CD4-positive, alpha-beta memory T cell (primary cell): ENCODE measurements at regions of chr9 and their contacts with region 1.

Region 1: DNA sequence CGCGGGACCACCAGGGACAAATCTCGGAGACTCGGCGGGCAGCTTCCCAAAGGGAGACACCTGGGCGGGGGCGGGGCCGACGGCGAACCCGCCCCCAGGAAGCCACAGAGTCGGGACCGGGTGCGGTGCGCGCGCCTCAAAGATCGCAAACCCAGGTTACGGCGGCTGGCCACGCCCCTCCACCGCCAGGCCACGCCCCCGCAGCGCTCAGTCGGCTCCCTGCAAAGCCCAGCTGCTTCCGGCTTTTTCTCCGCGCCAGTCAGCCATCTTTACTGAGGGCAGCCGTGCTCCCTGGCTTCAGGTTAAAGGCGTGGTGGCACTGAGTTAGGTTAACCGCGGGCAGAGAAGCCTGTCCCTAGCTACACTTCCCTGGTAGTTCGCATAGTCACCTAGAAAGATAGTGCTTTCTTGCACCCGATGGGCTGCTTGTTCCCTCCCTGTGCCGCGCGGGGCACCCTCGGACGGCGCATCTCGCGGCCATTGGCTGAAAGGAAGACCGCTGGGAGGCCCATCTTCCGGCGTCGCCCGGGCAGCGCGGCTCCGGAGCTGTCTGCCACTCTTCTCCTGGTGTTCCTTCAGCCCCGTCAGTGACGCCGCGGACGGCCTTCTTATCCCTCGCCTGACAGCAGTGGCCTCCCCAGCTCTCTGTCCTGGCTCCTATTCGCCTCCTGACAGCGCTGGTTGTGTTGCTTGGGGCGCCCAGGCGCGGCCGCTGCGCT is at the start of gene TBC1D2:
- DNase-seq: peak; percentile 96 to 98 (median 97)
- H3K4me3 ChIP-seq: peak within 1 kb of the TSS; percentile 90 to 91
- H3K4me3 Mint-ChIP-seq: peak within 1 kb of the TSS; percentile 93 to 99 (median 97)
- H3K27ac ChIP-seq: peak within 1 kb of the TSS; percentile 82
- H3K27ac Mint-ChIP-seq: peak within 1 kb of the TSS; percentile 87 to 97 (median 95)
- H3K4me1 ChIP-seq: peaks cover 35% of the 10 kb centered on the region
- H3K4me1 Mint-ChIP-seq: peaks cover 23 to 50% (median 40%) of the 10 kb centered on the region in 4 donors
- H3K27me3 ChIP-seq: no peaks in the 10 kb centered on the region
- H3K27me3 Mint-ChIP-seq: no peaks in the 10 kb centered on the region
- total RNA-seq, gene TBC1D2: 11.2 to 11.4 TPM

Region 2: DNA sequence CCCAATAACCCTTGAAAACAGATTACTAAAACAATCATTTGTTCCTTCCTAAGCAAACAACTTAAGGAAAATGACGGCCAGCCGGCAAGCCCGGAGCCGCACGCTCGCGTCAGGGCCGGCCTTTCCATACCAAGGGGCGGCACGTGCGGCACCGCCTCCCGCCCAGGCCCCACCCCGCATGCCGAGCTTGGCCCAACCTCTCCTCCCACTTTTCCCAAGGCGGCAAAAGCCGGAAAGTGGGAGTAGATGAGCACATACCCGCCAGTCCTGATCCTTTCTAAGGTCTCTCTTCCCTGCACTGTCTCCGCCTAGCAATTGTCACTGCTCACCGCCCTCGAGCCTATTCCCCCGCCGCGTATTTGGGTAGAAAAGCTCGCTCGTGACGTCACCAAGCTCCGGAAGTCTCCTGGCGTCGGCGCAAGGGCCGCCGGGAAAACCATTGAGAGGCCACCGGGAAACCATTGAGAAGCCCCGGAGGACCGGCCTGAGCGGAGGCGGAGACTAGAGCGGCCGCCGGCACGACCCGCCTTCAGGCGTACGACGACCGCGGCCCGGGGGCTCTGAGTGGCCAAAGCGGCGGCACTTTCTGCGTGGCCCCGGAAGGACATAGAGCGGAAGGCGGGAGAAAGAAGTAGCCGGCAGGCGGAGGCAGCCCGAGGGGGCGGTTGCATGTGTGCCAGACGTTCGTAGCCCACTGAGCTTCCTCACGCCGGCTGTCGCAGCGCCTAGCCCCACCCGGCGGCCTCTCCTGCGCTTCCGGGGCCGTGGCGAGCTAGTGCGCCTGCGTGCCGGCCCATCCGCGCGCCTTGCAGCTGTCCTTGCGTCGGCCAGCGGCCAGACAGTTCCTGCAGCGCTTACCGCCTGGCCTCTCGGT is 622.5 kb before region 1 on chr9 and contains the starts of genes NCBP1 and TSTD2:
- CTCF ChIA-PET with region 1: no interaction called
- POLR2A ChIA-PET with region 1: interaction called, 18 read pairs
- intact Hi-C with region 1: loop called (anchors 1 kb)
- DNase-seq: peak; percentile 96 to 97 (median 97)
- H3K4me3 ChIP-seq: peak within 1 kb of the TSS; percentile 80 to 87
- H3K4me3 Mint-ChIP-seq: peak within 1 kb of the TSS; percentile 96 to 100 (median 98)
- H3K27ac ChIP-seq: peak within 1 kb of the TSS; percentile 92
- H3K27ac Mint-ChIP-seq: peak within 1 kb of the TSS; percentile 96 to 100 (median 100)
- H3K4me1 ChIP-seq: peaks cover 52% of the 10 kb centered on the region
- H3K4me1 Mint-ChIP-seq: peaks cover 37 to 65% (median 51%) of the 10 kb centered on the region in 4 donors
- H3K27me3 ChIP-seq: no peaks in the 10 kb centered on the region
- H3K27me3 Mint-ChIP-seq: no peaks in the 10 kb centered on the region
- total RNA-seq, gene NCBP1: 40.7 to 50.8 TPM
- total RNA-seq, gene TSTD2: 17.8 to 18.4 TPM

Region 3: DNA sequence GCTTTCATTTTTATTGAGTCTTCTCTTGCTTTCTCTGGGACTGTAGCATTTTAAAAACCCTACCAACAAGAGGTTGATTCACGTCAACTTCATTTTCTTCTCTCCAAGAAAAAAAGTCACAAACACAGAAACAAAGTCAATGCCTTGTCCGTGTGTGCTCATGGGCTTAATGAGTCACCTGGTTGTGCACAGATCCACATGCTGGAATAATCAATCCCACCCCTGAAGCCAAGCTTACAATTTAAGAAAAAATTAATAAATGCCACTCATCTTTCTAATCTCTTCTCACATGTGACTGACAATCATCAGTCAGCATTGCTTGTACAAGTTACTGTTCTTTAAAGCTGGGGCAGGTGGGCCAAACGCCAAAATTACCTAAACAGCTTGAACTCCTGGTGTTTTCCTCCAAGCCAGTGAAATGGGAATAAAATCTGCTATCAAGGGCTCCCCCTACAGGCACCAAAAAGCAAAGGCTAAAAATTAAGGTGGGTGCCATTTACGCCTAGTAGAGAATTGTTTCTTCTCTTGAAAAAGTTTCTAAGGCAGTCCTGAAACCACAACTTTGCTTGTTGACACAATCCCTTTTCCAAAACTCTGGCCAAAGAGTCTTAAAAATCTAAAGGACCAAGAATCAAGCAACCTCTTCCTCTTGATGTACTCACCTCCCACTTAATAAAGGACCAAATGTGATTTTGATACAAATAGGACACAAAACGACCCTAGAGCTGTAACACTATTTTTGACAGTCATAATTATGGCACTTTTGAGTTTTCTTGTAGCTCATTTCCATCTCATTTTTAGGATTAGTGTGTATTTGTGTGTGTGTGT is 354.8 kb before region 1 on chr9:
- CTCF ChIA-PET with region 1: interaction called, 3 read pairs
- POLR2A ChIA-PET with region 1: interaction called, 11 read pairs
- intact Hi-C with region 1: loop called (anchors 5 kb)
- DNase-seq: peak; percentile 39 to 54 (median 43)
- H3K4me3 ChIP-seq: no peak overlapping the region
- H3K4me3 Mint-ChIP-seq: peak overlapping the region in 3 of 8 donors; percentile 20 to 59 (median 43)
- H3K27ac ChIP-seq: peak overlapping the region; percentile 21
- H3K27ac Mint-ChIP-seq: peak overlapping the region; percentile 75 to 93 (median 92)
- H3K4me1 ChIP-seq: peaks cover 59% of the 10 kb centered on the region
- H3K4me1 Mint-ChIP-seq: peaks cover 33 to 63% (median 45%) of the 10 kb centered on the region in 4 donors
- H3K27me3 ChIP-seq: no peaks in the 10 kb centered on the region
- H3K27me3 Mint-ChIP-seq: no peaks in the 10 kb centered on the region

Region 4: DNA sequence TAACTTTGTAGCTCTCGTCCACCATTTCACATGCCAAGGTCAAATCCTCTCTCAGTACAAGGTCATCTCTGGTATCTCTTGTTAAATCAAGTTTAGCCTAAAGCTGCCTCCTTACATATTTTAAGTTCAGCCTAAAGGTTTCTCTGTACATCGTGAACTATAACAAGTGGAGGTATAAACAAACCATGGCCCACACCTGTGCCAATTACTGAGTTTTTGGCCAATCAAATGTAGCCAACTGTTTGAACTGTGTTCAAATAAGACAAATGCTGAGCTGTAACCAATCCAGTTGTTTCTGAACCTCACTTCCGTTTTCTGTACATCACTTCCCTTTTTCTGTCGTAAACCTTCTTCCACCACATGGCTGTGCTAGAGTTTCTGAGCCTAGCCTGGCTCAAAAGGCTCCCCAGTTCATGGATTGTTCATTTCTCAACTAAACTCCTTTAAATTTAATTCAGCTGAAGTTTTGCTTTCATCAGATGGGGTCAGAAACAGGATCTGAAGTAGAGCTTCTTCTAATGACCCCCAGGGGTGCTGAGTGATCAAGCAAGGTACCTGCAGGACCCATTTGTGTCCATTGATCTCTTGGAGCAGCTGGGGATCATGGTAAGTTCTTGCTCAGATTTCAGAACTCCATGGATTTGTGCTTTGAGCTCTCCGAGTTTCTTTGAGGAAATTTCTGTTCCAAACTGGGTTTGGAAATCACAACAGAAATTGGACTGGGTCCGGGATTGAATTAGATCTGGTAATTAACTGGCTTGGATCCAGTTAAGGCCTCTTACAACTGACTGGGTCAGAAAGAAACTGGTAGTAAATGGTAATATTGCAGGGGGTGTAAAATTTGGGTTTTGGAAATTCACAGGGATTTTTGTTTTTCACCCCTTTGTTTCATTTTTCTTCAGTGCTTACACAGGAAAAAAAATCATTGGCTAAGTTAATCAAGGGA is 210.2 kb before region 1 on chr9:
- CTCF ChIA-PET with region 1: interaction called, 6 read pairs
- POLR2A ChIA-PET with region 1: interaction called, 19 read pairs
- intact Hi-C with region 1: no loop called
- DNase-seq: peak; percentile 60 to 80 (median 71)
- H3K4me3 ChIP-seq: peak overlapping the region; percentile 9 to 15
- H3K4me3 Mint-ChIP-seq: peak overlapping the region; percentile 65 to 88 (median 80)
- H3K27ac ChIP-seq: peak overlapping the region; percentile 9
- H3K27ac Mint-ChIP-seq: peak overlapping the region; percentile 29 to 97 (median 89)
- H3K4me1 ChIP-seq: peaks cover 22% of the 10 kb centered on the region
- H3K4me1 Mint-ChIP-seq: peaks cover 11 to 31% (median 15%) of the 10 kb centered on the region in 4 donors
- H3K27me3 ChIP-seq: no peaks in the 10 kb centered on the region
- H3K27me3 Mint-ChIP-seq: no peaks in the 10 kb centered on the region

Region 5: GRCh38 chr9:98064623-98065392 is 190.9 kb before region 1 on chr9:
- CTCF ChIA-PET with region 1: no interaction called
- POLR2A ChIA-PET with region 1: interaction called, 66 read pairs
- intact Hi-C with region 1: no loop called
- DNase-seq: no peak
- H3K4me3 ChIP-seq: no peak overlapping the region
- H3K4me3 Mint-ChIP-seq: no peak overlapping the region
- H3K27ac ChIP-seq: no peak overlapping the region
- H3K27ac Mint-ChIP-seq: peak overlapping the region in 2 of 7 donors; percentile 16 to 29
- H3K4me1 ChIP-seq: no peaks in the 10 kb centered on the region
- H3K4me1 Mint-ChIP-seq: peaks cover 8 to 15% (median 10%) of the 10 kb centered on the region in 4 donors
- H3K27me3 ChIP-seq: no peaks in the 10 kb centered on the region
- H3K27me3 Mint-ChIP-seq: no peaks in the 10 kb centered on the region

Region 6: DNA sequence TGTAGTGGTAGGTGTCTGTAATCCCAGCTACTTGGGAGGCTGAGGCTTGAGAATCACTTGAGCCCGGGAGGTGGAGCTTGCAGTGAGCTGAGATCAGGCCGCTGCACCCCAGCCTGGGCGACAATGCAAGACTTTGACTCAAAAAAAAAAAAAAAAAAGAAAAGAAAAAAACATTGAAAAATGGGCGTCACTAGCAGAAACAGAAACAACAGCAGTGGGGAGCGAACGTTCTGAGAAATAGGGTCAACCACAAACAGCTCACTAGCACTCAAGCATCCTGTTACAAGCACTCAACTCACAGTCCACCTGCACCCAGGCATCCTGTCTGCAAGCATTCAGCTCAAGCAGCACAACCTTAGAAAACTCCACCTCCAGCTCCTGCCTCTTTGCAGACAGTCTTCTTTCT is 153.9 kb before region 1 on chr9:
- CTCF ChIA-PET with region 1: interaction called, 5 read pairs
- POLR2A ChIA-PET with region 1: interaction called, 44 read pairs
- intact Hi-C with region 1: loop called (anchors 1 kb)
- DNase-seq: peak; percentile 85 to 95 (median 94)
- H3K4me3 ChIP-seq: peak overlapping the region in 1 of 2 donors; percentile 40
- H3K4me3 Mint-ChIP-seq: peak overlapping the region; percentile 67 to 85 (median 78)
- H3K27ac ChIP-seq: peak overlapping the region; percentile 64
- H3K27ac Mint-ChIP-seq: peak overlapping the region; percentile 91 to 98 (median 94)
- H3K4me1 ChIP-seq: peaks cover 99% of the 10 kb centered on the region
- H3K4me1 Mint-ChIP-seq: peaks cover 58 to 94% (median 77%) of the 10 kb centered on the region in 4 donors
- H3K27me3 ChIP-seq: no peaks in the 10 kb centered on the region
- H3K27me3 Mint-ChIP-seq: no peaks in the 10 kb centered on the region

Region 7: GRCh38 chr9:98118640-98119601 is 136.8 kb before region 1 on chr9 and contains the start of gene TRIM14:
- CTCF ChIA-PET with region 1: interaction called, 21 read pairs
- POLR2A ChIA-PET with region 1: interaction called, 112 read pairs
- intact Hi-C with region 1: loop called (anchors 2 kb)
- DNase-seq: peak; percentile 35 to 71 (median 45)
- H3K4me3 ChIP-seq: peak within 1 kb of the TSS; percentile 70 to 87
- H3K4me3 Mint-ChIP-seq: peak within 1 kb of the TSS; percentile 87 to 96 (median 92)
- H3K27ac ChIP-seq: peak within 1 kb of the TSS; percentile 92
- H3K27ac Mint-ChIP-seq: peak within 1 kb of the TSS; percentile 89 to 99 (median 95)
- H3K4me1 ChIP-seq: peaks cover 70% of the 10 kb centered on the region
- H3K4me1 Mint-ChIP-seq: peaks cover 37 to 65% (median 50%) of the 10 kb centered on the region in 4 donors
- H3K27me3 ChIP-seq: no peaks in the 10 kb centered on the region
- H3K27me3 Mint-ChIP-seq: no peaks in the 10 kb centered on the region
- total RNA-seq, gene TRIM14: 86.1 to 86.2 TPM

Region 8: GRCh38 chr9:98271479-98271878 is 15.7 kb after region 1 on chr9:
- CTCF ChIA-PET with region 1: no interaction called
- POLR2A ChIA-PET with region 1: no interaction called
- intact Hi-C with region 1: no loop called
- DNase-seq: no peak
- H3K4me3 ChIP-seq: no peak overlapping the region
- H3K4me3 Mint-ChIP-seq: no peak overlapping the region
- H3K27ac ChIP-seq: no peak overlapping the region
- H3K27ac Mint-ChIP-seq: no peak overlapping the region
- H3K4me1 ChIP-seq: no peaks in the 10 kb centered on the region
- H3K4me1 Mint-ChIP-seq: no peaks in the 10 kb centered on the region
- H3K27me3 ChIP-seq: no peaks in the 10 kb centered on the region
- H3K27me3 Mint-ChIP-seq: peaks cover 11 to 27% of the 10 kb centered on the region in 2 donors